Cardiac septum (tissue), 1 donor: ENCODE measurements at regions of chr14 and their contacts with region 1.

Region 1: GRCh38 chr14:22386924-22387775 is 201.9 kb downstream of the DAD1 start:
- DNase-seq: no peak

Region 2: GRCh38 chr14:21647380-21647779 is 739.8 kb before region 1 on chr14:
- intact Hi-C with region 1: no loop called
- DNase-seq: no peak

Region 3: GRCh38 chr14:22333422-22334276 is 53.5 kb before region 1 on chr14:
- intact Hi-C with region 1: no loop called
- DNase-seq: no peak

Region 4: GRCh38 chr14:22460461-22461195 is 73.5 kb after region 1 on chr14:
- intact Hi-C with region 1: no loop called
- DNase-seq: no peak

Region 5: GRCh38 chr14:22472935-22473854 is 86.0 kb after region 1 on chr14:
- intact Hi-C with region 1: loop called (anchors 1 kb)
- DNase-seq: no peak

Region 6: DNA sequence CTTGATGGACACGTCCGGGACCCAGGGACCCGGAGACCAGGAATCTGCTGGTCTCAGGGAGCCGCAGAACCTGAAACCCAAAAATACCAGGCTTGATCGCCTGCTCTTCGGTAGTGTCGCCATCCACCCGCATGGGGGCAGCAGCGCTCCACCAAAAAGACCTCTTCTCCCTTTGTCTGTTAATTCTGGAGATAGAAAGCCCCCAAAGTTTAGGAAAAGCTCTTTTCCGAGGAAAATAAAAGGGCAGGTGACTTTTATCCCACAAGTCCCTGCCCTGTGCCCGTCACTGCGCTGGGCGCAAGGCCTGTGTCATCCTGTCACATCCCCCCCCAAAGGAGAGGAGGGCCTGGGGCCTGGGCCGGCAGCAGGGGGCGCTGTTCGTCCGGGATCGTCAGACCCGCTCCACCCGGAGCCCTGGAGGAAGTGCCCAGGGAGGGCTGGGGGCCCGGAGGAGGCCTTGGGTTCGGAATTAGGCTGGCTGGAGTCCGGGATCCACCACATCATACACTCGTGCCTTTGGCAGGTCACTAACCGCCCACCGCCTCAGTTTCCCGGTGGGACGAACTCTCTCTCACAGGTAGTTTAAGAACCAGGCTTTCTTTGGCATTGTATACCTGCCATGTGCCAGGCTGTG is 170.0 kb after region 1 on chr14:
- intact Hi-C with region 1: loop called (anchors 5 kb)
- DNase-seq: peak; percentile 93